ENCODE measurements at regions of chr19 and their contacts with region 1.

Region 1: GRCh38 chr19:11606484-11606883 is 9.2 kb downstream of the ZNF627 start:
- DNase-seq: no peak

Region 2: DNA sequence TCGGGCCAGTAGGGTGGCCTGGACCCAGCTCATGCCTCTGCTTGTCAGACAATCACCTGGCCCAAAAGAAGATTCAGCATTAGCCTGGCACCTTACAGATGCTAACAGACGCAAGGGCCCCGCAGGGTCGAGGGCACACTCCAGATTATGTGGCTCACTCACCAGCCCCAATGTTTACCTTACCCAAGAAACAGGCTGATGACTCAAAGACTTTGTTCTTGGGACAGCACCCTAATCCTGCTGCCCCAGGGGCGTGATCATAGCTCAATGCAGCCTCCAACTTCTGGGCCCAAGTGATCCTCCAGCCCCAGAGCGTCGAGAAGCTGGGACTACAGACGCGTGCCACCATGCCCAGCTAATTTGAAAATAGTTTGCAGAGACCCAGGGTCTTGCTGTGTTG is 87.3 kb before region 1 on chr19:
- intact Hi-C with region 1: no loop called
- DNase-seq: no peak

Region 3: DNA sequence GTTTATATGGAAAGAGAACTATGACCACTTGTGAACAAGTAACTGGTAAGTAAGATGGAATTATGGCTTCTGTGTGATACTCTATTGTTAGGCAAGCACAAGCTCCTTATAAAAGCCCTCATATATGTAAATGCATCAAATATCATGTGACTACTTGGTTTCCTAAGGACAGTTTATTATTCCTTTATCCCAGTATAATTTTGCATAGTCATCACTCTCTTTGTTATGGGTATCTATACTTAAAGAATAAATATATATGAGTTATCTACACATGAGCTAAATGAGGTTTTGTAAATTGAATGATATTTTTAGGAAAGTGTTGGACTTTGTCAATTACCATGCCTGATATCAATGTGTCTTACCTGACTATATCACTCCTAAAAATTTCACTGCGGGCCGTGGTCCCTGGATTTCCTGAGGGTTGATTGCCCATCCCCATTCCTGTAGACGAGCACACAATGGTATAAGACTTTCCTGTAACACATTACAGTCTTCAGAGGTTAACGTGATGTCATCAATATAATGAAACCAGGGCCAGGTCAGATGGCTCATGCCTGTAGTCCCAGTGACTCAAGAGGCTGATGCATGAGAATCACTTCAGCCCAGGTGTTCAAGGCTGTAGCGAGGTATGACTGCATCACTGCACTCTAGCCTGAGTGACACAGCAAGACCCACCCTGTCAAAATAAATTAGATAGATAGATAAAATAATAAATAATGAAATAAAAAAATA is 478.8 kb after region 1 on chr19:
- intact Hi-C with region 1: loop called in 1 of 2 experiments (anchors 5 kb)
- DNase-seq: no peak

Measured in posterior vena cava (tissue), 2 donors.